Left cardiac atrium (tissue), 4 donors: ENCODE measurements at regions of chr6 and their contacts with region 1.

Region 1: DNA sequence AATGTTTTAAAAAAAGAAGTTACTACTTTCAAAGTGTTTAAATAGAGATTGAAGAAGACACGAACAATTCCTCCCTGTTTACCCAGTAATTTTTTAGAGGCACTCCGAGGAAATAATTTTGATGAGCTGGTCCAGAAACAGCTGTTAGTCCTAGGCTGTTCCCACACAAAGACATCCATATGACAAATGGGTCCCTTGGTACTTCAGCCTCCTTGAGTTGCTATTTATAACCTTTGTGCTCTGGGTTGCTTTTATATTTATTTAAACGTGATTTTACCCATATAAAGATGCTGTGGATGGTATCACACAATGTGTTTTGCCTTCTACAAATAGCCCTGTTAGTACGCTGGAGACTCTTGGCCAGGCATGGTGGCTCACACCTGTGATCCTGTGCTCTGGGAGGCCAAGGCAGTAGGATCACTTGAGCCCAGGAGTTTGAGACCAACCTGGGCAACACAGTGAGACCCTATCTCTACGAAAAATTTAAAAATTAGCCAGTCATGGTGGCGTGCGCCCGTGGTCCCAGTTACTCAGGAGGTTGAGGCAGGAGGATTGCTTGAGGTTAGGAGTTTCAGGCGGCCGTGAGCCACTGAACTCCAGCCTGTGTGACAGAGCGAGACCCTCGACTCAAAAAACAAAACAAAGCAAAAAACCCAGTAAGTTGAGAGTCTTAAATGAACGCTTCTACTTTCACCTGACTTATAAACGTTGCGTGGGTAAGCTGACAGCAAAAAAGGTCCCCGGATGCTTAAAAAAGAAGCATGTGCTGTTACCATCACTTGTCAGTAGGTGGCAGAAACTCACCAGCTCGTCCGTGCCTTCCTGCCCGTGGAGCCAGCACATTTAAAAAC is 56.9 kb upstream of the ARMH2 start:
- DNase-seq: peak; percentile 49
- ATAC-seq: peak; percentile 59 to 70

Region 2: DNA sequence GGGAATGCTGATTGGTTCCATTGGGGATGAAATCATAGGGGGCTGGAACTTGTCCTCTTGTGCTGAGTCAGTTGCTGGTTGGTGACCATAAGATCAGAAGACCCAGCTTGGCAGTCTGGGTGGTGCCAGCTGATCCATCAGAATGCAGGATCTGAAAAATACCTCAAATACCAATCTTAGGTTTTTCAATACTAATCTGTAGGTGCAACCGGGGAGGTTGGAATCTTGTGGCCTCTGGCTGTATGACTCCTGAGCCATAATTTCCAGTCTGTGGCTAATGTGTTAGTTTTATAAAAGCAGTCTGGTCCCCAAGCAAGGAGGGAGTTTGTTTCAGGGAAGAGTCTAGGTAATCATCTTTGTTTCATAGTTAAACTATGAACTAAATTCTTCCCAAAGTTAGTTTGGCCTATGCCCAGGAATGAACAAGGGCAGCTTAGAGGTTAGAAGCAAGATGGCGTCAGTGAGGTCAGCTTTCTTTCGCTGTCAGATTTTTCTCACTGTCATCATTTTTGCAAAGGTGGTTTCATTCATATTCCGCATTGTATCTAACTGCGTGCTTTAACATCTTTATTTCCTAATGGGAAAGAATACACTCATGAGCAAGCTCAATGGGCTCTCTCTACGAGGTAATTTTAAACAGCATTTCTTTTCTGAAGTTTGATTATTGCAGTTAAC is 58.9 kb before region 1 on chr6:
- intact Hi-C with region 1: no loop called
- DNase-seq: no peak
- ATAC-seq: no peak

Region 3: DNA sequence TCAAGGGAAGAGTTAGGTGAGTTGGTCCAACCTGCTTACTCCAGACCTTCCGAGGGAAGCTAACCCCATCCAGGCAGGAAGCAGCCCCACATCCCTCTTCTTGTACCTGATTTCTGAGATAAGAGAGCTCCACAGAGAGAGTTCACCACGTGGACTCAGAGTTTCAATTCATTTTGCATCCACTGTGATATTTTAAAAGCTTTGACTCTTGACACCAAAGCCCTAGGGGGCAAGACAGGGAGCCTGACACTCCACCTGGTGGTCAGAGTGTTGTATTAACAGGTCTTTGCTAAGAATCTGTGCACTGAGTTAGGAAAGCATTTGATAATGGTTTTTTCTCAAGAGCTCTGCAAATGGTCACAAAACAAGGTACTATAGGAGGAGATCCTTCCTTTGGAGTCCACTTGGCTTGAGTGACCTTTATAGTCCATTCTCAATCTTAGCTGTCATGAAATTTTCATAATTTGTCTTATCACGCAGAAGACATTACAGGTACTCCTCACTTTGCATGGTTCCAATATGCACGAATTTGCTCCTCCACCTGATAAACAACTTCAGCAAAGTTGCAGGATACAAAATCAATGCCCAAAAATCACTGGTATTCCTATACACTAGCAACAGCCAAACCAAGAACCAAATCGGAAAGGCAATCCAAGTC is 136.3 kb after region 1 on chr6:
- intact Hi-C with region 1: loop called in 1 of 2 experiments (anchors 5 kb)
- DNase-seq: no peak
- ATAC-seq: peak; percentile 72 to 75

Region 4: DNA sequence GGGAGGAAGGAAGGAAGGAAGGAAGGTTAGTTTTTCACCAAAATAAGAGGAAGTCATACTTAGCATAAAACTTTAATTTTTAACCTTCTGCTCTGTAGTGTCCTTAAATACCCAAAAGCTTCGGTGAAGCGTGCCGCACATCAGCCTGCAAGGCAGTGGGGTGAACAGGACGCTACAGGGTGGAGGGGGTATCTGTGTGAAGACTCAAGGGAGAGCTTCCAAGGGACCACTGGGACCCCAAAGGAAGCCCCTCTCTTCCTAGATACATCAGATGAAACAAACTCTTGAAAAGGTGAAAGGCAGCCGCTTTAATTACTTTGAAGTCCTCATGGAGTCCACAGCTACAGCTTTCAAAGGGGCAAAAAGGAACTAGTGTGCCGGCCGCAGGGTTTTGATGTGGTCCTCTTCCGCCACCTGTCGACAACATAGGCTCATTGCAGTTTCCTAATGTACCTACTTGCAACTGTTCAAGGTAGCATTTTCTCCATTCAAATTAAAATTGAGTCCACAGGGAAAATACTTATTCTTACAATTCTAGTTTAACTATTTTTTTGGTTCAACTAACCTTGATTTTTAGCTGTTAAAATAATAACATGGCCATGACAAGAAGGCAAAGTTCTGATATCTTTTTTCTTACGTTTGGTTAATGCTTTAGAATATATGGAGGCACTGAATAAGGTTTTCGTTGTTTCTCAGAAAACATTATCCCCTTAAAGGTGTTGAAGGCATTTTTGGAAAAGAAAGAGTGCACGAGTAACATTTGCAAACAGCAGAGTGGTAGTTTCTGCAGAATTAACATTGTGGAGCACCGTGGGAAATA is 215.1 kb after region 1 on chr6:
- intact Hi-C with region 1: loop called (anchors 1 to 5 kb)
- DNase-seq: peak; percentile 80
- ATAC-seq: peak; percentile 68 to 87